Posterior vena cava (tissue), 2 donors: ENCODE measurements at regions of chr16 and their contacts with region 1.

Region 1: DNA sequence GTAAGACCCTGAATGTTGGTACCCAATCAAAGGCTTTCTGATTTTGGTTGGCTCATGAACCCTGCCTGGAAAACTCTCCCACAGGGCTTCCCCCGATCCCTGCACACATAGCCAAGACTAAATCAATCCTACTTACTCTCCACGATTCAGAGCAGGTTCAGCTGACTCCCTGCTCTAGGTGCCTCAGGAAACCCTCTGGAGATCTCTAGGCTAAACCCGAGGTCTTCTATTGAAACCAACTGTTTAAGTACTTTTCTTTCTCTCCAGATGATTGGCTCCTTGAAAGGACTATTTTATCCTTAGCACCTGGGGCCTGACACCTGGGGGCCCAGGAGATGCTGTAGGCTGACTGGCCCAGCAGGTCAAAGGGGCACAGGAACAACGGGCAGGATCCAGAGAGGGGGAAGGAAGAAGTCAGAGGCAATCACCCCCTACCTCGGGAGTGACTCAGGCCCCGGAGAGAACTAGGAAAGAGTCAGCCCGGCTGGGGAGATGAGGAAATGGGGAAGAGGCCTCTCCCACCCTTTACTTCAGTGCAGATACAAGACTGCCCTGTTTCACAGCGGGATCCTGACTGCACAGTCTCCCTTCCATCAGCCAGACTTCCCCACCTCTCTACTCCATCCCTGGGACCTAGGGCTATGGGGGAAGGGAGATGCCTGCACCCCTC is 2.0 kb downstream of the TBC1D10B start:
- DNase-seq: no peak

Region 2: DNA sequence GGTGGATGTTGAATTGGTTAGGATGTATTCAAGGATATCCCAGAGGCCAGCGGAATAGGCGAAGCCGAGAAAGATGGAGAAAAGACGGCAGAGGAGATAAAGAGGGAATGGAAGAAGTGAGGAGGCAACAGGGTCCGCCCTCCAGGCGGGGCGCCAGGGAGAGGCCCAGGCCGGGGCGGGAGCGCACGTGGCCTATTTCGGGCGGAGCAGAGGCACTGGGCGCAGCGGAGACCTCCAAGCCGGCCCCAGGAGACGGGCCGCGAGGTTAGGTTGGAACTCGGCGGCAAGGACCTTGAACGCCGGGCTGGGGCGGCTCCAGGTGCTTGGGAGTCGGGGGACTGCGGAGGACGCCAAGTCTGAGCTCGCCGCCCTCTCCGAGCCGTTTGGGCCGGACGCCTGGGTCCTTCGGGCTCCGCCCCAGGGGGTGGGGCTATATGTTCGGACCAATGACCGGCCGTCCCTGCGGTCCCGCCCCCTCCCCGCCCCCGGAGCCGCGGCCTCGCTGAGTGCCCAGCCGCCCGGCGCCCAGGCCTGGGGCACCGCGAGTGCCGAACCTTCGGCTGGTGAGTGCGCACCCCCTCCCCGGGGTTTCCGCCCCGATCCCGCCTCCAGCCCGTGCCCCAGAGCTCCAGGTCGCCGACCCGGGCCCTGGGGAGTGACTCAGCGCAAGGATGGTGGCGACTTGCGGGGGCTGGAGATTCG is 39.0 kb after region 1 on chr16 and contains the start of gene ZNF771:
- intact Hi-C with region 1: loop called in 1 of 2 experiments (anchors 1 kb)
- DNase-seq: peak; percentile 98
- total RNA-seq, gene ZNF771: 5.6 to 6.1 TPM

Region 3: GRCh38 chr16:30571695-30572600 is 203.7 kb after region 1 on chr16 and contains the start of gene ZNF688:
- intact Hi-C with region 1: no loop called
- DNase-seq: peak; percentile 99
- total RNA-seq, gene ZNF688: 8.8 to 10.8 TPM

Region 4: GRCh38 chr16:30602616-30603277 is 234.5 kb after region 1 on chr16:
- intact Hi-C with region 1: no loop called
- DNase-seq: no peak

Region 5: GRCh38 chr16:31440516-31441184 is 1072.4 kb after region 1 on chr16:
- intact Hi-C with region 1: no loop called
- DNase-seq: no peak